Activated CD4-positive, alpha-beta memory T cell treated with anti-CD3 and anti-CD28 coated beads for 36 hours (primary cell): ENCODE measurements at regions of chr22 and their contacts with region 1.

Region 1: GRCh38 chr22:19479357-19480172 is at the start of gene CDC45:
- DNase-seq: peak; percentile 97
- H3K4me3 Mint-ChIP-seq: peak within 1 kb of the TSS; percentile 99
- H3K27ac Mint-ChIP-seq: peak within 1 kb of the TSS; percentile 98
- H3K4me1 Mint-ChIP-seq: peaks cover 41% of the 10 kb centered on the region
- H3K27me3 Mint-ChIP-seq: no peaks in the 10 kb centered on the region
- total RNA-seq, gene CDC45: 122 to 130 TPM

Region 2: DNA sequence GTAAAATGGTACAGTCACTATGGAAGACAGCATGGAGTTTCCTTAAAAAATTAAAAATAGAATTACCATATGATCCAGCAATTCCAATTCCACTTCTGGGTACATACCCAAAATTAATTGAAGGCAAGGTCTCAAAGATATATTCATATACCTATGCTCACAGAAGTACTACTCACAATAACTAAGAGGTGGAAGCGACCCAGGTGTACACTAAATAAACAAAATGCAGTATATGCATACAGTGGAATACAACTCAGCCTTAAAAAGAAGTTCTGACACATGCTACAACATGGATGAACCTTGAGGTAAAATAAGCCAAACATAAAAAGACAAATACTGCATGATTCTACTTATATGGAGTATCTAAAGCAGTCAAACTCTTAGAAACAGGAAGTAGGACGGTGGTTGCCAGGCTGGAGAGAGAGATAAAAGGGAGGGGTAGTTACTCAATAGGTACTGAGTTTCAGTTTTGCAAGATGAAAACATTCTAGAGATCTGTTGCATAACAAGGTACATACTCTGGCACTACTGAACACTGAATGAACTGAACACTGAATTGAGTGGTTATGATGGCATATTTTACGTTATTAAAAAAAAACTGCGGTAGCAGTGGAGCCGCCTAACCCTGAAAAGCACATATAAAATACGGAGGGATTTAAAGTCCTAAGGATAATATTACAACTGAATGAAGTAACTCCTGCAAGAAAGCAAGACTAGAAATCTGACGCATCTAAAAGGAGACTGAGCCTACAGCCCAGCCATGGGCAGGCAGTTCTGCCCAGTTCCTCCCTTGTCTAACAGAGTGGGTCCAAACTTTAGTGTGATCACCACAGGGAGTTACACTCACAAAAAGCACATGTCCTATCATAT is 370.1 kb before region 1 on chr22:
- CTCF ChIA-PET with region 1: no interaction called
- POLR2A ChIA-PET with region 1: no interaction called
- intact Hi-C with region 1: loop called (anchors 5 kb)
- DNase-seq: peak; percentile 67
- H3K4me3 Mint-ChIP-seq: peak overlapping the region; percentile 34
- H3K27ac Mint-ChIP-seq: peak overlapping the region; percentile 85
- H3K4me1 Mint-ChIP-seq: peaks cover 63% of the 10 kb centered on the region
- H3K27me3 Mint-ChIP-seq: no peaks in the 10 kb centered on the region

Region 3: GRCh38 chr22:19178656-19179496 is 300.7 kb before region 1 on chr22 and contains the start of gene SLC25A1:
- CTCF ChIA-PET with region 1: interaction called, 7 read pairs
- POLR2A ChIA-PET with region 1: interaction called, 3 read pairs
- intact Hi-C with region 1: loop called (anchors 1 kb)
- DNase-seq: peak; percentile 89
- H3K4me3 Mint-ChIP-seq: peak within 1 kb of the TSS; percentile 64
- H3K27ac Mint-ChIP-seq: no peak within 1 kb of the TSS
- H3K4me1 Mint-ChIP-seq: peaks cover 32% of the 10 kb centered on the region
- H3K27me3 Mint-ChIP-seq: no peaks in the 10 kb centered on the region
- total RNA-seq, gene SLC25A1: 62.9 to 67.4 TPM

Region 4: DNA sequence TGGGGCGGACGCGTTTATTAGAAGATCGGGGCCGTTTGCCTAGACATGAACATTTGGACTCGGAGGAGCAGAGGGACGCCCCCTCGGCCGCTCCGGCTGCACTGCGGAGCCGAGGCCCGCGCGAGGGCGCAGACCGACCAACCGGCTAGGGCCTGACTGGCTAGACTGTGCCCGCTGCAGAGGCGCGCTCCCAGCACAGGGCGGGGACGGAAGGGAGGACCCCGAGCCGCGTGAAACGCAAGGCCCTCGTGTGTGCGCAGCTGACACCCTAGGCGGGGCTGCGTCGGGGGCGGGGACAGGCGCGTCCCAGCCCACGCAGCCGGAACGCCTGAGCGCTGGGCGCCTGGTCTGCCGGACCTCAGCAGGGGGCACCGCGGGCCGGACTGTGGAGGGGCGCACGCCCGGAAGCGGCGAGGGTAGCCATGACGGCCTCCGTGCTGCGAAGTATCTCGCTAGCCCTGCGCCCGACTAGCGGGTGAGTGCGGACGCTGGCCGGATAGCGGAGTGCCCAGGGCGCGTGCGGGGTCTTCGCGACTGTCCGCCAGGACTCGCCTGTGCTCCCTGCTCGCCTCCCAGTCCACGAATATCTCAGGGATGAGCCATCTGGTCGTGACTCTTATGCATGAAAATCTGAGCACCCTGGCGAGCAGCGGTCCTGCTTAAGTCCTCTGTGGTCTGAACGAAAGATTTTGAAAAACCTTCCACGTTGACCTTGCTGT is 47.3 kb before region 1 on chr22 and contains the start of gene MRPL40:
- CTCF ChIA-PET with region 1: interaction called, 3 read pairs
- POLR2A ChIA-PET with region 1: interaction called, 5 read pairs
- intact Hi-C with region 1: loop called (anchors 1 kb)
- DNase-seq: peak; percentile 94
- H3K4me3 Mint-ChIP-seq: peak within 1 kb of the TSS; percentile 81
- H3K27ac Mint-ChIP-seq: peak within 1 kb of the TSS; percentile 91
- H3K4me1 Mint-ChIP-seq: peaks cover 40% of the 10 kb centered on the region
- H3K27me3 Mint-ChIP-seq: no peaks in the 10 kb centered on the region
- total RNA-seq, gene MRPL40: 36.5 to 38.5 TPM

Region 5: DNA sequence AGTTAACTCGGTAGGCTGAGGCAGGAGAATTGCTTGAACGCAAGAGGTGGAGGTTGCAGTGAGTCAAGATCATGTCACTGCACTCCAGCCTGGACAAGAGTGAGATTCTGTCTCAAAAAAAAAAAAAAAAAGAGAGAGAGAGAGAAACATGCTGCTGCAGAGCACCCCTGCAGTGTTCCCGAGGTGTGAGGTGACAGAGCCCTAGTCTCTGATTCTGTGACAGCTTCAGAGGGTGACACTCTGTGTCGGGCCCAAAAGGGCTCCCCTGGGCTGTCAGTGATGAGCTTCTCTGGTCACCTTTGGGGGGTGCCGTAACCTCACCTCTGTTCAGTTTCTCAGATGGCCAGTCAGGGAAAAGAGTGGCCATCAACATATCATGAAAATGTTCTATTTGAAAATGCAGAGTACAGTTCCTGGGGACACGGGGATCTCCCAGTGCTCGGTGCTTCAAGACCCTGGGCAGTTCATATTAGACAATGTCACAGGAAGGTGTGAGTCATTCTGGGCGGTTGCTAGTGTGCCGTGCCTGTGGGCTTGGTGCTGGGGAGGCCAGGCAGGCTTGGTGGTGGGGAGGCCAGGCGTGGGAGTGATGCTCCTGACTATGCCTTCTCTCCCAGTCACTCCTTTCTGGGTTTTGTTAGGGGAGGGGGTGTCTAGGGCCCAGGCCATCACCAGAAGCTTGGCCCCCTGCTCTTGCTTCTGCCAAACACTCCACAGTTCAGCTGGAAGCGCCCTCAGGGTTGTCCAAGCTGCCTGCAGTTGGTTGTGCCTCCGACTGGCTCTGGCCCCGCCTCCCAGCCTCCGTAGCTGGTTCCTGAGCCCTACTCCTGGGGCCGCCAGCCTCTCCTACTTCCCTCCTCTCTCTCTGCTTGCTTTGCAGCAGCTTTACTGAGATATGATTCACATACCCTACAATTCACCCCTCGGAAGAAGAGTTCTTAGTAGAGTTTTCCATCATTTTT is 97.2 kb after region 1 on chr22:
- CTCF ChIA-PET with region 1: no interaction called
- POLR2A ChIA-PET with region 1: no interaction called
- intact Hi-C with region 1: loop called (anchors 1 kb)
- DNase-seq: peak; percentile 88
- H3K4me3 Mint-ChIP-seq: peak overlapping the region; percentile 11
- H3K27ac Mint-ChIP-seq: peak overlapping the region; percentile 83
- H3K4me1 Mint-ChIP-seq: peaks cover 45% of the 10 kb centered on the region
- H3K27me3 Mint-ChIP-seq: no peaks in the 10 kb centered on the region

Region 6: DNA sequence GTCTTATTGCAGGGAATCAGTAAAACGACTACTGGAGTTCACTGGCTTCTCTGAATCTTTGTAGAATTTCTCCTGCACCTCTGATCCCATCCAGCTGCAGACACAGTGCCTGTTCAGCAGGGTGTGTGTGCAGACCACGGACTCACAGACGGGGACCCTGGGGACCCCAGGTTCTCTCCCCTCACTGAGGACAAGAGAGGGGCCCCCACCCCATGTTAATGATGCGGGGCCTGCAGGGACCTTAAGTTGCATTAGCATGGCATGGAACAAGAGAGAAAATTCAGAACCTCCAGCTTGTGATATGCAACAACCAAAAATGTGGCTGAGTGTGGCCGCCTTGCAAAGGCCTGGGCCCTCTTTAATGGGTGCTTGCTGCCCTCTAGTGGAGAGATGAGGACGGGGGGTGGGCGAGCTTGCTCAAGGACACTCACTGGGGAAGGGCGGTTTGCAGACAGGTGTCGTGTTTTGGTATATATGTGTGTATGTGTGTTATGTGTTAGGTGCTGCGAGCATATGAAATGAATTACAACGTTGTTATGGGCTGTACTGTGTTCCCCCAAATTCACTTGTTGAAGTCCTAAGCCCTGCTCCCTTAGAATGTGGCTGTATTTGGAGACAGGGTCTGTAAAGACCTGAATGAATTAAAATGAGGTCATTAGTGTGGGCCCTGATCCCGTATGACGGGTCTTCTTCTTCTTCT is 150.3 kb after region 1 on chr22:
- CTCF ChIA-PET with region 1: interaction called, 16 read pairs
- POLR2A ChIA-PET with region 1: no interaction called
- intact Hi-C with region 1: loop called (anchors 5 kb)
- DNase-seq: peak; percentile 91
- H3K4me3 Mint-ChIP-seq: no peak overlapping the region
- H3K27ac Mint-ChIP-seq: no peak overlapping the region
- H3K4me1 Mint-ChIP-seq: peaks cover 2% of the 10 kb centered on the region
- H3K27me3 Mint-ChIP-seq: peaks cover 6% of the 10 kb centered on the region